ENCODE measurements at regions of chr1 and their contacts with region 1.

Region 1: DNA sequence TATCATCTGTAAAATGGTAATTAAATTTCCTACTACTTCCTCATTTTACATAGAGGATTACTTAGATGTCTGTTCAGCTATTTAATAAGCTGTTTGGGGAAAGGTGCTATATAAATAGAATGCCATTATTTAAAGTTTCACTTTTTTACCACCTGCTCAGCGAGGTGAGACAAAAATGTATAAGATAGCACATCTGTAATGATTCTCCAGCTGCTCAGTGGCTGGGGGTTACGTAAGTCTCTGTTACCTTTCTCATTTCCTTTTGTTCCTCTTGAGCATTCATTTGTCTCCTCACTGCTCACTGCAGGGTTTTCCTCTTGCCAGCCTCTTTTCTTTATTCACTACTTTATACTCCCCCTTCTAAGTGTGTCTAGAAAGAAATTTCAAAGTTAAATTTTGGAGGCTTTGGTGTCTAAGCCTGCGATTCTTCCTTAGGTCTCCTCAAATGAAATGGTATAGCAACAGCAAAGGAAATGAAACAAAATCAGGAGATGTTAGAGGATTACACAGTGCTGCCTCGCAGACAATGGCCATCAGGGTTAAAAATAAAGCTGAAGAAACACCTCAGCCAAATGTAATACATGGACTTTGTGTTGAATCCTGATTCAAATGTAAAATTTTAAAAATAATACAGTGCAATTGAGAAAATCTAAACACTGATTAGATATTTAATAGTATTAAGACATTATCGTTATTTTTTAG is 6.8 kb downstream of the RGS8 start:
- DNase-seq: no peak
- ATAC-seq: no peak

Region 2: DNA sequence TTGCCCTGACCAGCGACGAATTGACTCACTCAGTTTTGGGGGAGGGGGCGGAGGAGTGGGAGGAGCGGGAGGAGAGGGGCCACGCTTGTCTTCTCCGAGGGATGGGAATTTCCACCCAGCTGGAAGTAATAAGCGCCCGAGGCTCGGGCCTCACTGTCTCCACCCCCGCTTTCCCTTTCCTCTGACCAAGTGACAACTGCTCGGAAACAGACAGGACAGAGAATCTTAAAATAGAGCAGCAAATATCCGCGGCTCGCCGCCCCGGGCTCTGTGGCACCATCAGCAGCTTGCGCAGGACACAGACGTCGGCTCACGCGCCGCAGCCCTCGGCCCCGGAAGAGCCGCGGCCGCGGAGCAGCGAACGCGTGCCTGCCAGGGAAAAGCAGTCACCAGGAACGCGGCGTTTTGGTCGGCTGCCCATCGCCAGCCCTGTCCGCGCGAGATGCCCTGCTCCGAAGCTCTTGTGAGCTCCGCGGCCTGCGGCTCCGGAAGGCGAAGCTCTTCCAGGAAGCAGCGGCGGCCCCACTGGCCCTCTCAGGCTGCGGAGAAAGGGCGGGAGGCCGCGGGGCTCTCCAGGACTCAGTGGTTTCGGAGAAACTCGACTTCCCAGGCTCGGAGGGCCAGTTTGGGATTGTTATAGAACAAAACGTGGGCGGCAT is 62.6 kb before region 1 on chr1:
- intact Hi-C with region 1: loop called (anchors 5 kb)
- DNase-seq: peak; percentile 93
- ATAC-seq: peak; percentile 91

Region 3: GRCh38 chr1:182781841-182782586 is 104.5 kb after region 1 on chr1:
- intact Hi-C with region 1: loop called (anchors 5 kb)
- DNase-seq: peak; percentile 82
- ATAC-seq: peak; percentile 78

Measured in Right ventricle myocardium inferior (tissue), 1 donor.